Sciatic nerve (tissue), 2 donors: ENCODE measurements at regions of chr6 and their contacts with region 1.

Region 1: GRCh38 chr6:108558372-108559096 is 2.2 kb upstream of the FOXO3 start:
- DNase-seq: peak; percentile 99
- ATAC-seq: peak; percentile 87

Region 2: GRCh38 chr6:108526739-108527174 is 31.8 kb before region 1 on chr6:
- intact Hi-C with region 1: no loop called
- DNase-seq: no peak
- ATAC-seq: peak; percentile 63

Region 3: GRCh38 chr6:108587258-108588059 is 28.9 kb after region 1 on chr6:
- intact Hi-C with region 1: loop called (anchors 1 kb)
- DNase-seq: no peak
- ATAC-seq: no peak

Region 4: GRCh38 chr6:108835218-108835850 is 276.8 kb after region 1 on chr6:
- intact Hi-C with region 1: loop called (anchors 5 kb)
- DNase-seq: peak; percentile 91
- ATAC-seq: peak; percentile 89